ENCODE measurements at regions of chr14 and their contacts with region 1.

Region 1: DNA sequence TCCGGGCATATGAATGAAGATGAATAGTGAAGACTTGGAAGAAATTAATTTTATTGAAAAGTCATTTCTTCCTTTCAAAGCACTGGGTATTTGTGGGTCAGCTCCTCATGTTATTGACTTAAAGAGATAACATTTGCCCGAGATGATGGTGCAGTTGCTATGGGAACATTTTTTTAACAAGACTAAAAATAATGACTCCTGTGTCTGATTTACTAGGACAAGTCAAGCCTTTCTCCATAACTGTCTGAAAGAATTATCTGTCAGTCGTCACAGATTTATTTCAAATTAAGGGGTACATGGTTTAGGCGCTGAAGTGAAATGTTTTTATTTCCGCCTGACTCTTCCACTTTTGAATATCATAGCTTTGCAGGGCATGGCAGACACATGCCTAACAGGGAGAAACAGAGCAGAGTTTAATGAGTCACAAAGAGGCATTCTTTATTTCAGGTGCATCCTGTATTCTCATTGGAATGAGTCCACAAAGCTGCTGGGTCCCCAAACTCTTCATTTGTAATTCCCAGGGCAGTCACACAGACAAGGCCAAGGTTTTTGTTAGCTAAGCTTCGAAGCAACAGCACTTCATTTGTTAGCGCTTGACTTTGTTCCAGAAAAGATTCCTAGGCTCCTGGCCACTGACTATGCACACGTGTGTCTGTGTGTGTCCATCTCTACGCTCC is 4.3 kb upstream of the GPHB5 start:
- DNase-seq: no peak
- H3K4me3 Mint-ChIP-seq: no peak overlapping the region
- H3K27ac Mint-ChIP-seq: no peak overlapping the region
- H3K4me1 Mint-ChIP-seq: no peaks in the 10 kb centered on the region
- H3K27me3 Mint-ChIP-seq: no peaks in the 10 kb centered on the region
- CTCF ChIP-seq: no peak

Region 2: DNA sequence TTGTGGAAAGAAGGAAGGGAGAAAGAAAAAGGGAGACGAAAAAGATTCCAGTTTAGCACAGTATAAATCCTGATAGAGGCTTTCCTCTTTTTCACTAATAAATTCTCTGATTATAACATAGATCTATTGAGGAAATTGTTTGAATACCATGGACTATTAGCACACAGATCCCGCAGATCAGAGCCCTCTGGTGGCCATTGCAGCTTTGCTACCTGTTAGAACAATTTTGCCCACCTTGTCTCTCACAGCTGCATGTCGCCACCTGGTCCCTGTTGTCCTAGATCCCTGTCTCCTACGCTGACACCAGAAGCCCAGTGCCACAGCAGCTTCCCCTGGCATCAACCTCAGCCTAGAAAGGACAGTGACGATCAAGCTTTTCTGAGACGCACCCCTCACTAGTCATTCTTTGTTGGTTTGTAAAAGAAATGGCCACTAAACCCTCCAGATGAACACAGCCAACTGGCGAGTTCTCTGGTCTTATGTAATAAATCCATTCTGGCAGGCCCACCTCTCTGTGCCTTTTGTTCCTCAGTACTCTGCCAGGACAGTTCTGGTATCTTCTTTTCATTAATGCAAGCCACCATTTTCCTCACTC is 14.2 kb before region 1 on chr14:
- CTCF ChIA-PET with region 1: interaction called, 11 read pairs
- POLR2A ChIA-PET with region 1: no interaction called
- intact Hi-C with region 1: no loop called
- DNase-seq: peak; percentile 38
- H3K4me3 Mint-ChIP-seq: no peak overlapping the region
- H3K27ac Mint-ChIP-seq: no peak overlapping the region
- H3K4me1 Mint-ChIP-seq: peaks cover 6% of the 10 kb centered on the region
- H3K27me3 Mint-ChIP-seq: peaks cover 11% of the 10 kb centered on the region
- CTCF ChIP-seq: peak; percentile 41

Measured in MCF 10A (cell line).